Right ventricle myocardium inferior (tissue), 1 donor: ENCODE measurements at regions of chr14 and their contacts with region 1.

Region 1: GRCh38 chr14:95527387-95528002 is 7.4 kb upstream of the GLRX5 start:
- DNase-seq: no peak
- ATAC-seq: peak; percentile 59

Region 2: DNA sequence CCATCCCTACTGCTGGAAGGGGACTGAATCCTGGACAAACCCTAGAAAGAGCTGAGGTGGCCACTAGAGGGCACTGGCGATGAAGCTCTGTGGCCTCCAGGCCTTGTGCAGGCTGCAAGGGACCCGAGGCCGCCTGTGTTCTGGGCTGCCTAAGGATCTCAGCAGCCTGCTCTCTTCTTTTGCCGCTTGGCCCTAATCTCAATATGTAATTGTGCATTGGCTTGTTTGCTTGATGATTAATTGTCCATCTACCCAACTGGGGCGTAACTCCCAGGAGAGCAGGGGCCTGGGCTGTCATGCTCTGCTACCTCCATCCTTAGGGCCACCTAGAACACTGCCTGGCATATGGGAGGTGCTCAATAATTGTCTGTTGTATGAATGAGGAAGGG is 84.9 kb before region 1 on chr14:
- intact Hi-C with region 1: loop called (anchors 1 kb)
- DNase-seq: peak; percentile 89
- ATAC-seq: peak; percentile 94

Region 3: DNA sequence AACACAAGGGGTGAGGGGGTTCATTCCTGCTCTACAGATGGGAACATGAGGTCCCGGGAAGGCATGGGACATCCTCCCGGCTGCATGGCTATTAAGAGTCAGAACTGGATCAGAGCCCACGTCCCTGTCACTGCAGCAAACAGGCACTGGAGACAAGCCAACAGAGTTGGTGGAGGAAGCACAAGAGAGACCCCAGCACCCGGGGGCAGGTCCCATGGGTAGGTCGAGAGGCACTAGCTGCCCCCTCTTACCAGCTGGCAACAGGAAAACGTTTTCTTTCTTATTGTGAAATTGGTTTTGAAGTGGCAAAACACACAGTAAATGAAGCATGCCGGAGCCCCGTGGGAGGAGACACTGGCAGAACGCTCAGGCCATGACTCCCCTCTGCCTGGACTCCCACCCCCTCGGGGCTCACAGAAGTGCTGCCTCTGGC is 54.7 kb before region 1 on chr14:
- intact Hi-C with region 1: no loop called
- DNase-seq: no peak
- ATAC-seq: peak; percentile 26

Region 4: DNA sequence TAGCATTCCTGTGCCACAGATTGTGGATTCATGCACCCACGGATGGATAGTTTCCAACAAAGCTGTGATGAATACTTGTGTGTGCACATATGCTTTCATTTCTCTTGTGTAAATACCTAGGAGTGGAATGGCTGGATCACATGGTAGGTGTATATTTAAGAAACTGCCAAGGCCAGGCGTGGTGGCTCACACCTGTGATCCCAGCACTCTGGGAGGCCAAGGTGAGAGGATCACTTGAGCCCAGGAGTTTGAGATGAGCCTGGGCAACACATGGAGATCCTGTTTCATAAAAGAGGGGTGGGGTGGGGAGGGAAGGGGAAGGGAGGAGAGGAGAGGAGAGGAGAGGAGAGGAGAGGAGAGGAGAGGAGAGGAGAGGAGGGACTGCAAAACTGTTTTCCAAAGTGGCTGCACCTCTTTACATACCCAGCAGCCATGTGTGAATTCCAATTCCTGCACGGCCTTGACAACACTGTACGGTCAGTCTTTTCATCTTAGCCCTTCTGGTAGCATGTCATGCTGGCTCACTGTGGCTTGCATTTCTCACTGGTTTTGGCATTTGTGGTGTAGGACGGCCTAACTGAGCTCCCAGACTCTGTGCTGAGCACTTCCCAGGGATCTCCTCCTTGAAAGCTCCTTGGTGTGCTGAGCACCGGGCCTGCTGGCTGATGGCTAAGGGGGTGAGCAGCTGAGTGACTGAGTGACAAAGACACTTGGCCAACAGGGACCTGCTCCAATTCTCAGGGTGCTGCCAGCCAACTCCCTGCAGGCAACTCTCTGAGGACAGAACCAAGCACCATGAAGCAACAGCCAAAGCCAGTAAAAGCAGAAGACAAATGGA is 38.9 kb before region 1 on chr14:
- intact Hi-C with region 1: loop called (anchors 1 kb)
- DNase-seq: no peak
- ATAC-seq: peak; percentile 60